Vagina (tissue), 2 donors: ENCODE measurements at regions of chr18 and their contacts with region 1.

Region 1: DNA sequence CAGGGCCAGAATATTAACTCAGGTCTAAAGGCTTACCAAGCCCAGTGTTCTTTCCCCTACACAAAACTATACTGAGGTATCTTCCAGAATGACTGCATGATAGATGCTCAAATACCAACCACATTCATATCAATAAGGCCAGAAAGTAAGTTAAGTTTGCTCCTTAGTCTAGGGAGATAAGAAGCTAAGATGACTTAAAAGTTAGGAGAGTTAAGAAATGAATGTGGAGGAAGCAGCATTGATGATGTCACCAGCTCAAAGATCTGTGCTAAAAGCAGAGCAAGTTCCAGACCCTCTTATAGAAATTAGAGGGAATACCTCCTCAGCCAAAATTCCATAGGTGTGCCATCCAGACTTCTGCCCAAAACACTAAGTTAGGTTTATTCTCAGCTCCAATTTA is 6.1 kb downstream of the PPP4R1 start:
- DNase-seq: no peak
- H3K4me3 ChIP-seq: no peak overlapping the region
- H3K27ac ChIP-seq: no peak overlapping the region
- H3K4me1 ChIP-seq: peaks cover 67% of the 10 kb centered on the region
- H3K27me3 ChIP-seq: no peaks in the 10 kb centered on the region
- CTCF ChIP-seq: no peak
- POLR2A ChIP-seq: no peak

Region 2: GRCh38 chr18:9581667-9582066 is 26.6 kb before region 1 on chr18:
- intact Hi-C with region 1: loop called (anchors 2 kb)
- DNase-seq: no peak
- H3K4me3 ChIP-seq: no peak overlapping the region
- H3K27ac ChIP-seq: no peak overlapping the region
- H3K4me1 ChIP-seq: peaks cover 5% of the 10 kb centered on the region
- H3K27me3 ChIP-seq: no peaks in the 10 kb centered on the region
- CTCF ChIP-seq: no peak
- POLR2A ChIP-seq: no peak